ENCODE measurements at regions of chr14 and their contacts with region 1.

Region 1: GRCh38 chr14:75050852-75051554 is at the start of gene MLH3:
- DNase-seq: peak; percentile 92
- H3K4me3 ChIP-seq: peak within 1 kb of the TSS; percentile 46 to 82 (median 62)
- H3K27ac ChIP-seq: peak within 1 kb of the TSS; percentile 87 to 93 (median 89)
- H3K4me1 ChIP-seq: peaks cover 0 to 30% (median 14%) of the 10 kb centered on the region in 4 donors
- H3K27me3 ChIP-seq: no peaks in the 10 kb centered on the region
- CTCF ChIP-seq: no peak
- EP300 ChIP-seq: no peak
- POLR2A ChIP-seq: peak in 1 of 2 donors; percentile 55
- total RNA-seq, gene MLH3: 30.0 to 42.9 (median 34.7) TPM

Region 2: DNA sequence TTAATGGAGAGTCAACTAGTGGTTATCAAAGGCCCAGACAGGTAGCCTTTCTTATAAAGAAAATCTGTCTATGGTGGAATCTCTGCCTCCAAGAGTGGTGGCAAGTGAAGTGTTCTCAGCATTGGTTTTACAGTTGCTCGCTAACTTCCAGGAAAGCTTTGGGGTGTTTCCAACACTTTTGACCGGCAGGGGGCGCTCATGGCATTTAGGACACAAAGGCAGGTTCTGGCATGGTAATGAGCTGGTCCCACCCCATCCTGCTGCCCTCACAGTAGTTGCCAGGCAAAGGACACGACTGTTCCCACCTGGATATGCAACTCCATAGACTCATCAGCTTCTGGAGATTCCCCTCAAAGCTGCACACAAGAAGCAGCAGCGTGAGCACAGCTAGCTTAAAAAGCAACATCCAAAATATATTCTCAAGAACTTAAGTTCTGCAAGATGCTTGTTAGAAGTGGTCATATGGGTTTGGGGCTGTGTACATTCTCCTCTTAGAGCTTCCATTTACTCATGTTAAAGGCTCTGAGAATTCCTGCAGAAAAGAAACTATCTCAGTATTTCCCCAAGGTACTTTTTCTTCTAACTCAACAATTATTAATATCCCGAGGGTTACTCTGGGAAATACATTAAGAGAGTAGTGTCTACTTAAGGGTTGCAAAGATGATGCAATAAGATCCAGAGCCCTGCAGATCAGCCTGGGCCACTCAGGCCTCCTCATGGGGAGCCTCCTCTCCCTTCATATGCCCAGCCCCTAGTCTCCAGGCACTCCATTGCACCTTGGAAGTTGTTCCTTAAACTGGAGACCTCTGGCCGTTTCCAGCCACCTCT is 189.9 kb before region 1 on chr14:
- intact Hi-C with region 1: no loop called
- DNase-seq: peak; percentile 92
- H3K4me3 ChIP-seq: no peak overlapping the region
- H3K27ac ChIP-seq: no peak overlapping the region
- H3K4me1 ChIP-seq: peaks cover 0 to 10% (median 7%) of the 10 kb centered on the region in 4 donors
- H3K27me3 ChIP-seq: no peaks in the 10 kb centered on the region
- CTCF ChIP-seq: peak; percentile 58 to 89 (median 74)
- EP300 ChIP-seq: no peak
- POLR2A ChIP-seq: no peak

Region 3: DNA sequence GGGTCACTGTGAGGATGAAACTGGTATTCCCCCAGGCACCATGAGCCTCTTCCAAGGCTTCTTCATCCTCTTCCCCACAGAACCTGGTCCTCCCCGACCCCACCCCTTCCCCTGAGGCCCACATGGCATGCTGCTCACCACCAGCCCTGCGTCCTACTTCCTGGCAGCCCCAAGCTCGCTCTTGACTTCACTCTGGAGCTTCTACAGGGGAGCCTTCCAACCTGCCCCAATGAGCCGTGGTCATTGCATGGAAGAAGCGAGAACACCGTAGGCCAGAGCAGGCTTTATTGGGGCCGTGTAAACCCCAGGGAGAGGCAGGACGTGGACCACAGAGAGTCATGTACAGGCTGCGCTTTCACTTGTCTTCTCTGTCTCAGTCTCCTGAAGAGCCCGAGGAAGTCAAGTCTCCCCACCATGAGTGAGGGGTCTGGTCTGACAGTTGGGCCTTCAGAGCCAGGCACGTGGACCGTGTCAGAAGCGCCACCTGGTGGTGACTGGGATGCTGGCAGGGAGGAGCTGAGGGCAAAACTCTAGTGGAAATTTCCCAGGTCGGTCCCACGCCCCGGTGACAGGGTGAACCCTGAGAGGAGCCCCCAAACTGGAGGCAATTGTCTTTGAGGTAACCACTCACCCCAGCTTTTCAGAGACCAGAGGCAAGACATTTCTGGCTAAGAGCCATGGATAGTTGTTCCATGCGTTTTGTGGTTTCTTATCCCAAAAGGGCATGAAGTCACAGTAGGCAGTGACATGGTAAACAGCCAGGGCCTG is 145.4 kb before region 1 on chr14:
- intact Hi-C with region 1: no loop called
- DNase-seq: peak; percentile 87
- H3K4me3 ChIP-seq: no peak overlapping the region
- H3K27ac ChIP-seq: peak overlapping the region in 3 of 4 donors; percentile 15 to 44 (median 27)
- H3K4me1 ChIP-seq: peaks cover 0 to 26% (median 22%) of the 10 kb centered on the region in 4 donors
- H3K27me3 ChIP-seq: no peaks in the 10 kb centered on the region
- CTCF ChIP-seq: peak; percentile 84 to 89 (median 87)
- EP300 ChIP-seq: no peak
- POLR2A ChIP-seq: no peak

Region 4: GRCh38 chr14:75069045-75069810 is 18.2 kb after region 1 on chr14 and contains the start of gene ZC2HC1C:
- intact Hi-C with region 1: loop called (anchors 2 kb)
- DNase-seq: peak; percentile 98
- H3K4me3 ChIP-seq: peak within 1 kb of the TSS; percentile 46 to 61 (median 60)
- H3K27ac ChIP-seq: peak within 1 kb of the TSS; percentile 93 to 95 (median 94)
- H3K4me1 ChIP-seq: peaks cover 0 to 41% (median 26%) of the 10 kb centered on the region in 4 donors
- H3K27me3 ChIP-seq: no peaks in the 10 kb centered on the region
- CTCF ChIP-seq: no peak
- EP300 ChIP-seq: peak in 2 of 4 donors; percentile 49 to 75
- POLR2A ChIP-seq: peak; percentile 33 to 41
- total RNA-seq, gene ZC2HC1C: 3.6 to 4.6 (median 4.0) TPM

Region 5: GRCh38 chr14:75088574-75089373 is 37.8 kb after region 1 on chr14:
- intact Hi-C with region 1: loop called (anchors 5 kb)
- DNase-seq: no peak
- H3K4me3 ChIP-seq: no peak overlapping the region
- H3K27ac ChIP-seq: no peak overlapping the region
- H3K4me1 ChIP-seq: no peaks in the 10 kb centered on the region
- H3K27me3 ChIP-seq: no peaks in the 10 kb centered on the region
- CTCF ChIP-seq: peak; percentile 36 to 76 (median 72)
- EP300 ChIP-seq: no peak
- POLR2A ChIP-seq: no peak

Measured in sigmoid colon (tissue), 7 donors.